ENCODE measurements at regions of chr11 and their contacts with region 1.

Region 1: DNA sequence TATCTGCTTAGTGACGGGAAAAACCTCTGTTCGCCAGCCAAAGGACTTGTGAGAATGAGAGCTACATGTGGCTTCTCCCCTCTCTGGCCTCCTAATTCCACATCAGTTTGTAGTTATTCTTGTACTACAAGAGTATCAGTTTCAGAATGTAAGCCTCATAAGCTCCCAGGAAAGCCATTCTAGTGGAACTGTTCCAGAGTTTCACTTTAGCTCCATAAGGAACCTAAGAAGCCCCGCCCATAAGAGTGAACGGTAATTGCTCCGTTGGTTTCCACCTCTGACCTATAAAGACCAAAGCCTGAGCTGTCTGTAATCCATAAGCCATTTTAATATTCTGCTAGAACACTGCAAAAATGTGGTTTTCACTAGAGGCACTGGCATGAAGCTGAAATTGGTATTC is 53.0 kb downstream of the SIK3 start:
- DNase-seq: no peak
- H3K4me3 ChIP-seq: no peak overlapping the region
- H3K4me3 Mint-ChIP-seq: no peak overlapping the region
- H3K27ac ChIP-seq: peak overlapping the region in 1 of 2 donors; percentile 42
- H3K27ac Mint-ChIP-seq: peak overlapping the region in 4 of 7 donors; percentile 7 to 51 (median 13)
- H3K4me1 ChIP-seq: peaks cover 21 to 51% of the 10 kb centered on the region in 2 donors
- H3K4me1 Mint-ChIP-seq: peaks cover 62% of the 10 kb centered on the region
- H3K27me3 ChIP-seq: no peaks in the 10 kb centered on the region
- H3K27me3 Mint-ChIP-seq: peaks cover 0 to 2% (median 0%) of the 10 kb centered on the region in 3 donors
- CTCF ChIP-seq: no peak

Region 2: DNA sequence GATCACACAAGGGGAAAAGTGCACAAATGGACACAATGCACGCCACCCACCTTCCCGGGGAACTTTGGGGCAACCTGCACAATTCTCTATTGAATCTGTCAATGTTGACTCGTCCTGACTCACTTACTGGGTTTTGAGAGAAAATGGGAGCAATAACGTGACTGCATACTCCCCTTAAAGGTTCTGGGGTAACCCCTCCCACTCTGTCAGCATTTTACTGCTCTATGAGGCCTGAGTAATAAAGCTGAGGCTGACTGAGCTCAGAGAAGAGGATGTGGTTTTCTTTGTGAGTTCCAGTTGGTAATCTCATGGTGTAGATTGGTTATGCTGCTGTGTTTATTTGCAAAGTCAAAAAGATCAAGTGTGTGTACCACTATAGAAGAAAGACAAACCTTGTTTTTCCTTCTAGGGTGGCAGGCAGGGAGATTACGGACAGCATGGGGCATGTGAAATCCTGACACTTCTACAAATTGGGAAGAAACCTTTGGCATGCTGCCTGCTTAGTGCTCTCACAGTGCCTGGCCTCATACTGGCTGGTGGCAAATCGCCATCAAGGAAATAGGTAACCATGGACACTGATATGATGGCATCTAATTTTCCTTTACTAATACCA is 191.6 kb before region 1 on chr11:
- intact Hi-C with region 1: no loop called
- DNase-seq: peak; percentile 76 to 81 (median 80)
- H3K4me3 ChIP-seq: peak overlapping the region in 1 of 3 experiments; percentile 45
- H3K4me3 Mint-ChIP-seq: peak overlapping the region in 1 of 2 donors; percentile 47
- H3K27ac ChIP-seq: peak overlapping the region in 1 of 2 donors; percentile 87
- H3K27ac Mint-ChIP-seq: peak overlapping the region; percentile 75 to 94 (median 86)
- H3K4me1 ChIP-seq: peaks cover 35 to 55% of the 10 kb centered on the region in 2 donors
- H3K4me1 Mint-ChIP-seq: peaks cover 46% of the 10 kb centered on the region
- H3K27me3 ChIP-seq: no peaks in the 10 kb centered on the region
- H3K27me3 Mint-ChIP-seq: no peaks in the 10 kb centered on the region
- CTCF ChIP-seq: no peak

Region 3: DNA sequence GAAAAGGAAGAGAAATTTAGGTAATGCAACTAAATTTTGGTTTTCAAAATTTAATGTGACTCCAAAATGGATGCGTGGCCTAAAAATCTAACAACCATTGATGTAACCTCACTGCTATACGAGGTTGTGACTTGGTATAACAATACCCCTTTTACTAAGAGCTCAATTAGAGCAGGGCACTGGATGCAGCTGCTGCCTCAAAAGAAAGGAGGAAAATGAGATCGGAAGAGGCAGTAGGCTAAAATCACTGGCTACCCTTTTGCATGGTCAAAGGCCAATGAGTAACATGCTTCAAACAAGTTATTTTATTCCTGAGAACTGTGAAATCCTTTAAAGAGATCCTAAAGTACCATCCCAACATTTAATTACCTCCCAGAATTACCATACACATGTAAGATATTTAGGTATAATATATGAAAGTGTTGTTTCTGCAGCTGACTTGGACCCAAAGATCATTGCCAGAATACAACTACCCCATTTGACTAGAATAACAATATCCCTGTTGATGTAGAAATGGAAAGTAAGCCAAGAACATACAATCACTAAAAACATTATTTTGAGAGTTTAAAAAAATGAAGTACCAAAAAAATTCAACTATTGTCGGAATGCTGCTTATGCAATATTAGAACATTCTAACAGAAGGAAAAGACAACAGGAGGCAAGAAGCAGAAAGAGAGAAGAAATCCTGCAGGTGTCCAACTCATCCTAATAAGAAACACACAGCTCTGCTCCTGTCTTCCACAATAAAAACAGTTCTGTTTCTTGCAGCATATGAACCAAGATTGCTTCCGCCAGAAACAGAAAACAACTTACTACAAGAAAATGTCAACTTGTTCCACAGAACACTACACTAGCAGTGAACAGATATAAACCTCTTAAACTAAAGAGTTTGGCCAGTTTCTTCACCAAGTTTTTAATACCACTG is 38.1 kb after region 1 on chr11:
- intact Hi-C with region 1: loop called in 1 of 2 experiments (anchors 5 kb)
- DNase-seq: no peak
- H3K4me3 ChIP-seq: no peak overlapping the region
- H3K4me3 Mint-ChIP-seq: no peak overlapping the region
- H3K27ac ChIP-seq: peak overlapping the region in 1 of 2 donors; percentile 8
- H3K27ac Mint-ChIP-seq: peak overlapping the region in 2 of 7 donors; percentile 60 to 61
- H3K4me1 ChIP-seq: peaks cover 15 to 37% of the 10 kb centered on the region in 2 donors
- H3K4me1 Mint-ChIP-seq: peaks cover 59% of the 10 kb centered on the region
- H3K27me3 ChIP-seq: no peaks in the 10 kb centered on the region
- H3K27me3 Mint-ChIP-seq: no peaks in the 10 kb centered on the region
- CTCF ChIP-seq: no peak

Measured in CD14-positive monocyte (primary cell).